Activated T-helper 1 cell treated with anti-CD3 and anti-CD28 coated beads, Interleukin-12 subunit alpha, Interleukin-12 subunit beta, Interleukin-2, Interleukin-4 antibody, amounts not matched to agents 30 ng/mL and 10 ng/mL and 1 ng/mL, durations not matched to agents 14 hours and 24 hours and 36 hours (primary cell): ENCODE measurements at regions of chr13 and their contacts with region 1.

Region 1: DNA sequence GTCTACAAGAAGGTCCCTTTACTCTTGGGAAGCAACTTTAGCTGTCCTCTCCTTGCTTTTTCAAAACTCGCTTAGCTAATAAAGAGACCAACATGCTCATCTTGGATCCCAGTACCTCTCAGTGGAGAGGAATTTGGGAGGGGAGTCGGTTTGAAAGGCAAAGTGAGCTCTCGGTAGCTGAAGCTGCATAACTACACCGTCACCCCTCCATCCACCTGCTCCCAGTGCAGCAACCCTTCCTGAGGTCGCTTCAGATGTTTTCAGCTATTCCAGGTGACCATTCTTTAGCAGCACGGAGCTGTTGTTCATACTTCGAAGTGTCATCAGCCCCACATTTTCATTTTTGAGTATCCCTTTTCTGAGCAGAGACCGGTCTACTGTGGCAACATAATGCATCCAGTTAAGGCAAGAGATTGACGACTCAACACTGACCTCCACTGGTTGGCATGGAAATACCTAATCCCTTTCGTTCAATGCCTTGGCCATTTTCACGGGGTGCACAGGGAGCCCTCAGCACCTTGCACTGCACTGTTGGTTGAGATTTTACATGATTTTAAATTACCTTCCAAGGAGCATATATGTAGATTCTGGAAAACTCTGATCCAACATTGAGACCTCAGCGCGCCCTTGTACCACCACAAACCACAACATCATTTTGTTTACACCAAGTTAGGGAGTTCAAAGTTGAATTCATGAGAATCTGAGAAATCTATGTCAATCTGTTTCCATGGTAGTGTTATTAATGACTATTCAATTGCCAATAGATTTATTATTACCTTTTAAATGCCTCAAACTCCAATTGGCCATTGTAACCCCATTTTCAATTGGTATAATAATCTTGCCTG is 42.2 kb downstream of the DLEU7 start:
- DNase-seq: peak; percentile 50
- H3K4me3 Mint-ChIP-seq: no peak overlapping the region
- H3K27ac Mint-ChIP-seq: no peak overlapping the region
- H3K4me1 Mint-ChIP-seq: peaks cover 25% of the 10 kb centered on the region
- H3K27me3 Mint-ChIP-seq: no peaks in the 10 kb centered on the region

Region 2: DNA sequence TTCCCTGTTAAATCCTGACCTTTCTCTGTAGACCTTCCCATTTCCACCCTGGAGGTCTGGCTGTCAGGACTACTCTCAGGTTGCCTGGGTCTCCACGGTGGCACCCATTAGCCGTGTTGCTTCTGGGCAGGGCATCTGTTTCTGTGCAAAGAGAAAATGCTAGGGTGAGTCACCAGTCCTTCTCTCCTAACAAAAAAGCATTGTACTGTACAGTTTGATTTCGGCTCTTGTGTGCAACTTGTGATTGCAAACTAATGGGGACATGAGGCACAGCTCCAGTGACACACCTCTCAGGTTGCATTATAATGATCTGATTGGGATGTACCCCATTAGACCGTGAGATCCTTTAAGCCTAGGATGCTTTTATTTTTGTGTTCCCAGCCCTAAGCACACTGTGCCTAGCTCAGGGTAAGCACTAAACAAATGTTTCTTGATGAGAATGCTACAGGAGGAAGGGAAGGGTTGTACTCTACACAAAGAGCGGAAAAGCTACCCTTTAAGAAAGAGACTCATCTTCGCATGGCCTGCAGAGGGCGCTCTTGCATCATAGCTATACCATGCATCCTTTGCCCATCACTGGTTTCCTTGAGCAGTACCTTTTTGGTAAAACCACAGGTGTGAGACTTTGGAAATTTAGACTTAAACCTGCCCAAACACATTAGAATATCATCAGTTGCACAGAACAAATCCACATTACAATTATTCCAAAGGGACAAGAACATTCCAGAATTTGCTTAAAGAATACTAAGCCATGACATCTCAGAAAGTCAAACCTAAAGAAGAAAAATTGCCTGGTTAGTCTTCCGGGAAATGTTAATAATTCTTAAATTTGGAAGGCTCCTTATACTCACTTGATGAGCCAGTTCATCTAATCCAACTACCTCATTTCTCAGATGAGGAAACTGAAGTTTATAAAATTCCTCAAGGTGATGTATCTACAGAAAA is 824.7 kb before region 1 on chr13:
- intact Hi-C with region 1: loop called (anchors 1 kb)
- DNase-seq: peak; percentile 56
- H3K4me3 Mint-ChIP-seq: no peak overlapping the region
- H3K27ac Mint-ChIP-seq: no peak overlapping the region
- H3K4me1 Mint-ChIP-seq: peaks cover 5% of the 10 kb centered on the region
- H3K27me3 Mint-ChIP-seq: no peaks in the 10 kb centered on the region

Region 3: GRCh38 chr13:50130123-50130946 is 671.0 kb before region 1 on chr13:
- intact Hi-C with region 1: loop called (anchors 5 kb)
- DNase-seq: no peak
- H3K4me3 Mint-ChIP-seq: peak overlapping the region; percentile 83
- H3K27ac Mint-ChIP-seq: peak overlapping the region; percentile 94
- H3K4me1 Mint-ChIP-seq: peaks cover 56% of the 10 kb centered on the region
- H3K27me3 Mint-ChIP-seq: peaks cover 41% of the 10 kb centered on the region

Region 4: GRCh38 chr13:50236898-50237318 is 564.4 kb before region 1 on chr13:
- intact Hi-C with region 1: loop called (anchors 5 kb)
- DNase-seq: peak; percentile 45
- H3K4me3 Mint-ChIP-seq: peak overlapping the region; percentile 27
- H3K27ac Mint-ChIP-seq: peak overlapping the region; percentile 78
- H3K4me1 Mint-ChIP-seq: peaks cover 59% of the 10 kb centered on the region
- H3K27me3 Mint-ChIP-seq: peaks cover 22% of the 10 kb centered on the region

Region 5: DNA sequence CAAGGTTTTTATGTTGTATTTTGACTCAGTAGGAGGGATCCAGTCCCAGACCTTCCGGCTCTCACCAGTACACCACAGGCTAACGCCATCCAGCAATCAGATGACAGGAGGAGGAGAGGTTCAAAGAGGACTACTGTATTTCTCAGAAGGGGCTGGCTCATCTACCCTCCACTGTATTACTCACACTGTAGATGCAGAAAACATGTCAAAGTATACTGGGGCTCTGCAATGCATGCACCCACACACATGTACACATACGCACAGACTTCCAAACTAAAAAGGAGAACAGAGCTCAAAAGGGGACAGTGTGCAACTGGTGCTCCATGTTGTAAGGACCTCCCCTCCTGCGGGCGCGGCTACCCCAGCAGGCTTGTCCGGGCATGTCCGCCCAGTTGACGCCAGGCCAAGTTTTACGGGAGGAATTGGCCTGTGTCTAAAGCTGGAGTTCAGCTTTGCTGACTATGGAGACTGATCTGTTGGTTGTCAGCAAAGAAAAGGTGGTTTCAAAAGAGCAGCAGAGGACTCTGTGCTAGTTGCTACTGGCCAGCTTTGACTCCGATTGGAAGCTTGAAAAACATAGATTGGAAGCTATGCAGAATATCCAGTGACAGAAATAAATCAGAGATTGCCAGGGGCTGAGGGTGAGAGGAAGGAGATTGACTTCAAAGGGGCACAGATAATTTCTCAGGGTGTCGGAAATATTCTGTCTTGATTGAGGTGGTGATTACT is 272.0 kb before region 1 on chr13:
- intact Hi-C with region 1: loop called (anchors 1 kb)
- DNase-seq: no peak
- H3K4me3 Mint-ChIP-seq: no peak overlapping the region
- H3K27ac Mint-ChIP-seq: peak overlapping the region; percentile 59
- H3K4me1 Mint-ChIP-seq: peaks cover 45% of the 10 kb centered on the region
- H3K27me3 Mint-ChIP-seq: peaks cover 19% of the 10 kb centered on the region

Region 6: GRCh38 chr13:50685491-50685890 is 115.8 kb before region 1 on chr13:
- intact Hi-C with region 1: loop called (anchors 5 kb)
- DNase-seq: no peak
- H3K4me3 Mint-ChIP-seq: no peak overlapping the region
- H3K27ac Mint-ChIP-seq: no peak overlapping the region
- H3K4me1 Mint-ChIP-seq: peaks cover 10% of the 10 kb centered on the region
- H3K27me3 Mint-ChIP-seq: peaks cover 15% of the 10 kb centered on the region

Region 7: GRCh38 chr13:51070005-51070649 is 268.8 kb after region 1 on chr13:
- intact Hi-C with region 1: loop called (anchors 1 kb)
- DNase-seq: peak; percentile 70
- H3K4me3 Mint-ChIP-seq: no peak overlapping the region
- H3K27ac Mint-ChIP-seq: no peak overlapping the region
- H3K4me1 Mint-ChIP-seq: peaks cover 14% of the 10 kb centered on the region
- H3K27me3 Mint-ChIP-seq: peaks cover 11% of the 10 kb centered on the region

Region 8: GRCh38 chr13:51083706-51084105 is 282.4 kb after region 1 on chr13:
- intact Hi-C with region 1: no loop called
- DNase-seq: no peak
- H3K4me3 Mint-ChIP-seq: no peak overlapping the region
- H3K27ac Mint-ChIP-seq: no peak overlapping the region
- H3K4me1 Mint-ChIP-seq: no peaks in the 10 kb centered on the region
- H3K27me3 Mint-ChIP-seq: peaks cover 6% of the 10 kb centered on the region